PC-3 (cell line): ENCODE measurements at regions of chr4 and their contacts with region 1.

Region 1: GRCh38 chr4:14856076-14856933 is 146.0 kb upstream of the CPEB2 start:
- DNase-seq: peak; percentile 94
- ATAC-seq: peak; percentile 92
- H3K4me3 ChIP-seq: no peak overlapping the region
- H3K27ac ChIP-seq: peak overlapping the region; percentile 99
- H3K4me1 ChIP-seq: peaks cover 31% of the 10 kb centered on the region
- H3K27me3 ChIP-seq: no peaks in the 10 kb centered on the region
- CTCF ChIP-seq: no peak

Region 2: GRCh38 chr4:14916554-14917297 is 60.4 kb after region 1 on chr4:
- CTCF ChIA-PET with region 1: no interaction called
- POLR2A ChIA-PET with region 1: interaction called, 4 read pairs
- intact Hi-C with region 1: loop called (anchors 5 kb)
- DNase-seq: peak; percentile 84
- ATAC-seq: peak; percentile 94
- H3K4me3 ChIP-seq: no peak overlapping the region; the same call in 1 of the 2 replicates
- H3K27ac ChIP-seq: peak overlapping the region; percentile 79
- H3K4me1 ChIP-seq: peaks cover 16% of the 10 kb centered on the region
- H3K27me3 ChIP-seq: no peaks in the 10 kb centered on the region
- CTCF ChIP-seq: no peak

Region 3: GRCh38 chr4:15024386-15024785 is 168.1 kb after region 1 on chr4:
- CTCF ChIA-PET with region 1: no interaction called
- POLR2A ChIA-PET with region 1: no interaction called
- intact Hi-C with region 1: no loop called
- DNase-seq: no peak
- ATAC-seq: no peak
- H3K4me3 ChIP-seq: no peak overlapping the region
- H3K27ac ChIP-seq: no peak overlapping the region
- H3K4me1 ChIP-seq: no peaks in the 10 kb centered on the region
- H3K27me3 ChIP-seq: no peaks in the 10 kb centered on the region
- CTCF ChIP-seq: no peak